PC-3 (cell line): ENCODE measurements at regions of chr2 and their contacts with region 1.

Region 1: GRCh38 chr2:150495993-150496627 is 8.6 kb upstream of the RND3 start:
- DNase-seq: peak; percentile 96
- ATAC-seq: peak; percentile 87
- H3K4me3 ChIP-seq: peak overlapping the region; percentile 14; the same call in 1 of the 2 replicates
- H3K27ac ChIP-seq: peak overlapping the region; percentile 81
- H3K4me1 ChIP-seq: peaks cover 38% of the 10 kb centered on the region
- H3K27me3 ChIP-seq: no peaks in the 10 kb centered on the region
- CTCF ChIP-seq: no peak

Region 2: DNA sequence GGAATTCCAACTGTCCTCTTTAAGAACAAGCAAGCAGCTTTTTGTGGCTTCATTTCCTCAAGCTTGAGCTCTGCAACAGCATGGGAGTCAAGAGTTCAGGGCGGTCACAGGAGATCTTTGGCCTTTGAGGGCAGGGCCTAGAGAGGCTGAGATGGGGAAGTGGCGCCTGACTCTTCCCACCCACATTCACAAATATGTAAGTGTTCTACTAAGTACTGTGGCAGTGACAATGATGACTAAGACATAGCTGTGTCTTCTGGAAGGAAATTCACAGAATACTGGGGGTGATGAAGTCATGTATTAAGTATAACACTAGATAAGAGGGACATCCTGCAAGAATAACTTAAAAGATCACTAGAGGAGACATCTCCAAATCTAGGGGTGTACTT is 23.6 kb before region 1 on chr2:
- CTCF ChIA-PET with region 1: no interaction called
- POLR2A ChIA-PET with region 1: no interaction called
- intact Hi-C with region 1: no loop called
- DNase-seq: peak; percentile 48
- ATAC-seq: no peak; the same call in 1 of the 2 replicates
- H3K4me3 ChIP-seq: no peak overlapping the region
- H3K27ac ChIP-seq: peak overlapping the region; percentile 53; the same call in 1 of the 2 replicates
- H3K4me1 ChIP-seq: peaks cover 83% of the 10 kb centered on the region
- H3K27me3 ChIP-seq: no peaks in the 10 kb centered on the region
- CTCF ChIP-seq: no peak

Region 3: DNA sequence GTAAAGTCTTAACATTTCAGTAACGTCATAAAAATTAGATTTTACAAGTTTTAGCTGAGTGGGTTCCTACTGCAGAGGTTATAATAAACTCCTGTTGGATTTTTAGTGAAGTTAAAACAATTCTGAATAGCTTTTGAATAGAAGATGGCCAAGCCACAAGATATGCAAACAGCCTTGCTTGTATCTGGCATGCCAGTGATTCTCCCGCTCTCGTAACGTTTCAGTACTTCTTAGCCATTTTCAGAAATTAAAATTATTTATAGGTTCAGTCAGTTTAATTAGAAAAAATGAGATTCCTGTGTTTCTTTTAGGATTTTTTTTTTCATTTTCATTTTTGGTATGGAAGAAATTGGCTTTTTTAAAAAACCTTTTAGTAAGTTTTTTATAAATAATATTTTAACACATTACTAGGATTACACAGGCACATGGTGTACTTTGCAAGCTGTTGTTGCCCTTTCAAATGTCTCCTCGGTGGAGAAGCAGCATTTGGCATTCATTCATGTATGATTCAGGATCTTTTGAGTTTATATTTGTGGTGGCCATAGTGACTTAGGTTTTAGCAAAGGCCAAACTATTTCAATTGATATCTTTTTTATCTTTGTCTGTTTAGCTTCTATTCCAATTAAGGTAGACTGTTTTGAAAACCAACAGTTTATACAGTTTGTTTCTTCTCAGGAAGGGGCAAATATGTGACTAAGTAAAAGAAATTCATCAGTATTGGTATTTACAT is 22.0 kb after region 1 on chr2:
- CTCF ChIA-PET with region 1: no interaction called
- POLR2A ChIA-PET with region 1: no interaction called
- intact Hi-C with region 1: loop called (anchors 2 kb)
- DNase-seq: peak; percentile 50
- ATAC-seq: no peak
- H3K4me3 ChIP-seq: no peak overlapping the region
- H3K27ac ChIP-seq: no peak overlapping the region
- H3K4me1 ChIP-seq: peaks cover 26% of the 10 kb centered on the region
- H3K27me3 ChIP-seq: no peaks in the 10 kb centered on the region
- CTCF ChIP-seq: no peak